ENCODE measurements at regions of chr3 and their contacts with region 1.

Region 1: DNA sequence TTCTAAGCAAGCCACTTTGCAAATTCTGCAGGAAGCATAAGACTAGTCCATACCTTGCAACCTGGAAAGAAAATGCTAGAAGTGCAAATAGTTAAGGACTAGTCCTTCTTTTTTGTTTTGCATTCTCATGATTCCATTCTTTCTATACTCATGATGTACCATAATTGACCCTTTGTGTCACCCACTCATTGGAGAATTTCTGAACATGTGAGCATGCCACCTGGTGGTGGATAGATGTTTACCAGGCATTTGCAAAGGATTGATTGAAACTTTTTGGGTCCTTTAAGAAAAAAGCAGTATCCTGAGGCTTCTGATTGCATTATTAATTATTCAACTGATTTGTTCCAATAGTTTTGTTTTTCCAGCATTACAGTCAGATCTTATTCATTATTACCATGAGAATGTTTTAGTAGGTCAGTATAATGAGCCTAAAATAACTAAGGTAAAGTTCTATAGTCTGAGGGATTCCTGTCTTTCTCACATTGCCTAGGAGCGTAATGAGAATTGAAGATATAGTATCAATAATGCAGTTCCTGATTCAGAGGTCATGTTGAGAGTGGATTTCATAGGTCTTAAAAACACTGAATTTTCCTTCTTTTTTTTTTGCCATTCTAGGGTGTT is 20.2 kb upstream of the DIPK2A start:
- DNase-seq: peak; percentile 34
- ATAC-seq: peak; percentile 52; the same call in 2 of the 3 replicates
- H3K4me3 ChIP-seq: no peak overlapping the region
- H3K27ac ChIP-seq: no peak overlapping the region
- H3K4me1 ChIP-seq: no peaks in the 10 kb centered on the region
- H3K27me3 ChIP-seq: no peaks in the 10 kb centered on the region
- CTCF ChIP-seq: peak; percentile 46
- EP300 ChIP-seq: no peak
- POLR2A ChIP-seq: no peak
- RAD21 ChIP-seq: no peak

Region 2: GRCh38 chr3:143775459-143775858 is 176.0 kb before region 1 on chr3:
- CTCF ChIA-PET with region 1: no interaction called
- POLR2A ChIA-PET with region 1: no interaction called
- in situ Hi-C with region 1: no loop called
- intact Hi-C with region 1: loop called (anchors 10 kb)
- DNase-seq: peak; percentile 13
- ATAC-seq: peak; percentile 84
- H3K4me3 ChIP-seq: no peak overlapping the region
- H3K27ac ChIP-seq: no peak overlapping the region
- H3K4me1 ChIP-seq: no peaks in the 10 kb centered on the region
- H3K27me3 ChIP-seq: no peaks in the 10 kb centered on the region
- CTCF ChIP-seq: peak; percentile 48
- EP300 ChIP-seq: no peak
- POLR2A ChIP-seq: no peak
- RAD21 ChIP-seq: no peak

Region 3: DNA sequence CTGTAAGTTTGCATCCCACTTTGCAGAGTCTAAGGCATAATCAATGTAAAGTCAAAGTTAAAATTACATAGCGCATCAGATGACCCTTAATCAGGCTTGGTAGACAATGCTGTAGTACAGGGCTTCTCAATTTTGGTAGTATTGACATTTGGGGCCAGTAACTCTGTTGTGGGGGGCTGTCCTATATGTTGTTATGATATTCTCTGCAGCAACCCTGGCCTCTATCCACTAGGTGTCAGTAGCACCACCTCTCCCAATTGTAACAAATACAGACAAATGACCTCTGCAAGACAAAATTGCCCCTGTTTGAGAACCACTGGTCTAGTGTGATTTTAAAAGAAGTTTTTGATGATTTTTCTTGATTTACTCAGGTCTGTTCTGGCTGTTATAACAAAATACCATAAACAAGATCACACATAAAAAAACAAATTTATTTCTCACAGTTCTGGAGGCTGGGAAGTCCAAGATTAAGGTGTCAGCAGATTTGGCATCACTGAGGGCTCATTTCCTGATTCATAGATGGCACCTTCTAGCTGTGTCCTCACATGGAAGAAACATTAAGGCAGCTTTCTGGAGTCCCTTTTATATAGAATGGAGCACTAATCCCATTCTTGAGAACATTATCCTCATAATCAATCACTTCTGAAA is 65.6 kb before region 1 on chr3:
- CTCF ChIA-PET with region 1: no interaction called
- POLR2A ChIA-PET with region 1: no interaction called
- in situ Hi-C with region 1: no loop called
- intact Hi-C with region 1: loop called (anchors 1 kb)
- DNase-seq: peak; percentile 41
- ATAC-seq: peak; percentile 93
- H3K4me3 ChIP-seq: no peak overlapping the region
- H3K27ac ChIP-seq: no peak overlapping the region
- H3K4me1 ChIP-seq: no peaks in the 10 kb centered on the region
- H3K27me3 ChIP-seq: no peaks in the 10 kb centered on the region
- CTCF ChIP-seq: peak; percentile 67
- EP300 ChIP-seq: no peak
- POLR2A ChIP-seq: no peak
- RAD21 ChIP-seq: peak; percentile 25; the same call in 1 of the 2 replicates

Region 4: DNA sequence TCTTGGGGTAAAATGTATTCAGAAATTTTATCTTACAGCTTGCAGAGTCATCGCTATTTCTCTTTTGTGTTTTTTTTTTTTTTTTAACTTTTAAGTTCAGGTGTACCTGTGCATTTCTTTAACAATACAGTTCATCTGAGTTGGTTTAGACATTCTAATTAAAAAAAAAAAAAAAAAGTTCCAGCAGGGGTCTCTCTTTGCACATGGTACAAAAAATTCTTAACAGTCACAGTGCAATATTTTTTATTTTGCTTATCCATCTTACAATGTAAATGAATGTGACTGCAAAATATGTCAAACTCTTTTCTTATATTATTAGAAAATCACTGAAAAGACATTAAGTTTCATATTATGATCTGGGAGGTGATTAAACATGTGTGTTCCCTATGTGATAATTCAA is 55.7 kb before region 1 on chr3:
- CTCF ChIA-PET with region 1: no interaction called
- POLR2A ChIA-PET with region 1: no interaction called
- in situ Hi-C with region 1: no loop called
- intact Hi-C with region 1: loop called (anchors 1 kb)
- DNase-seq: no peak
- ATAC-seq: no peak
- H3K4me3 ChIP-seq: no peak overlapping the region
- H3K27ac ChIP-seq: no peak overlapping the region
- H3K4me1 ChIP-seq: no peaks in the 10 kb centered on the region
- H3K27me3 ChIP-seq: no peaks in the 10 kb centered on the region
- CTCF ChIP-seq: no peak
- EP300 ChIP-seq: no peak
- POLR2A ChIP-seq: no peak
- RAD21 ChIP-seq: no peak

Region 5: DNA sequence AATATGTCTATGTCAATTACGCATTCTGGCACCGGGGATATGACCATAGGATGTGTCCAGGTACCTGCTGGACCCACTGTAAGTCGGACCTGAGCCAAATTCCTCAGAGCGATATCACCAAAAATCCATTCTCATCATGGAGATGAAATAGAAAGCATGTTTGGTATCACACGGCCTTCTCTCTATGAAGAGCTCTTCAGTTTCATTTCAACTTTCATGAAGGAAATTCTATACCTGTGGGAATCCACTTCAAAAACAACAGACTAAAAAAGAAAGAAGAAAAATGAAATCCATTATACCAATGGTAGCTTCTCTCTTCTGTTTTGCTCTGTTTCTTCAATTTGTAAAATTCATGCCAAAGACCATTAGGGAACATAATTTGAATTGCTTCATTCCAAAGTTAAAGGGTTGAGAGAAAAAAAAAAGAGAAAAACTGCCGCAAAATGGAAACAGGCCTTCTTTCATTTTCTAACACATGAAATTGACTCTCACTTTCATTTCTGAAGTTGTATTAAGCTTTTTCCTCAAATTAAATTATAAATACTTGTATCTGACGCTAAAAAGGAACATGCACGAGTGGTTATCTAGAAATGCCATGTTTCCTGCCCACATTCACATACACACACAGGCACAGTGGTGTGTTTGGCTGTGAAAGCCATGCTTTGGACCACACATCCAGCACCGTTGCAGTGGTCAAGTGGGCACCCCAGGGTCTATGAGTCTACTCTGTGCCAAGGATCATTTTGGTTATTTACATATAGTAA is 26.8 kb before region 1 on chr3:
- CTCF ChIA-PET with region 1: no interaction called
- POLR2A ChIA-PET with region 1: no interaction called
- in situ Hi-C with region 1: no loop called
- intact Hi-C with region 1: no loop called
- DNase-seq: no peak
- ATAC-seq: no peak
- H3K4me3 ChIP-seq: no peak overlapping the region
- H3K27ac ChIP-seq: no peak overlapping the region
- H3K4me1 ChIP-seq: no peaks in the 10 kb centered on the region
- H3K27me3 ChIP-seq: no peaks in the 10 kb centered on the region
- CTCF ChIP-seq: no peak
- EP300 ChIP-seq: no peak
- POLR2A ChIP-seq: no peak
- RAD21 ChIP-seq: no peak

Measured in HepG2 (cell line).